ENCODE measurements at regions of chr5 and their contacts with region 1.

Region 1: DNA sequence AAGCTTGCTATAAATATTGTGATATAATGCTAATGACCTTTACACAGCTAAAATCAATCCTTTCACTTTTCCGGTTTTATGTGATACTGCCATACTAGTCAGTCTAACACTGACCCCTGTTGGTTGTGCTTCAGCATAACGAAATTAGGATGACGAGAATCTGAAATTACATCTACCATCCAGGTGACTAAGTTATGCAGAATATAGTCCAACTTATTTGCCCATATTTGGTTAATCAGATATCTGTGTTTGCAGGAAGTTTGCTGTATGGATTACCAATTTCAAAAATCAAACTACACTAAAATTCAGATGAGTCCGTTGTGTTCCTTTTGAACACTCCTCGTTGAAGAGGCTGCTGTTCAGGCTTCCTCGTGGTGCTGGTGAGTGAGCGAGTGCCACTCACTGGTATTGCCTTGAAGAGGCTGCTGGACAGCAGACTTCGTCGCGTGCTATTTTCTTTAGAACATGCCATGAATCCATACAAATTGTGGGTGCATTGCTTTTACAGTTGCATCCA is 32.5 kb downstream of the TENT4A start:
- DNase-seq: peak; percentile 7
- H3K4me3 ChIP-seq: no peak overlapping the region
- H3K27ac ChIP-seq: peak overlapping the region in 1 of 4 donors; percentile 22
- H3K4me1 ChIP-seq: peaks cover 0 to 5% (median 0%) of the 10 kb centered on the region in 4 donors
- H3K27me3 ChIP-seq: no peaks in the 10 kb centered on the region
- CTCF ChIP-seq: peak; percentile 63 to 84 (median 71)
- EP300 ChIP-seq: no peak
- POLR2A ChIP-seq: no peak

Region 2: DNA sequence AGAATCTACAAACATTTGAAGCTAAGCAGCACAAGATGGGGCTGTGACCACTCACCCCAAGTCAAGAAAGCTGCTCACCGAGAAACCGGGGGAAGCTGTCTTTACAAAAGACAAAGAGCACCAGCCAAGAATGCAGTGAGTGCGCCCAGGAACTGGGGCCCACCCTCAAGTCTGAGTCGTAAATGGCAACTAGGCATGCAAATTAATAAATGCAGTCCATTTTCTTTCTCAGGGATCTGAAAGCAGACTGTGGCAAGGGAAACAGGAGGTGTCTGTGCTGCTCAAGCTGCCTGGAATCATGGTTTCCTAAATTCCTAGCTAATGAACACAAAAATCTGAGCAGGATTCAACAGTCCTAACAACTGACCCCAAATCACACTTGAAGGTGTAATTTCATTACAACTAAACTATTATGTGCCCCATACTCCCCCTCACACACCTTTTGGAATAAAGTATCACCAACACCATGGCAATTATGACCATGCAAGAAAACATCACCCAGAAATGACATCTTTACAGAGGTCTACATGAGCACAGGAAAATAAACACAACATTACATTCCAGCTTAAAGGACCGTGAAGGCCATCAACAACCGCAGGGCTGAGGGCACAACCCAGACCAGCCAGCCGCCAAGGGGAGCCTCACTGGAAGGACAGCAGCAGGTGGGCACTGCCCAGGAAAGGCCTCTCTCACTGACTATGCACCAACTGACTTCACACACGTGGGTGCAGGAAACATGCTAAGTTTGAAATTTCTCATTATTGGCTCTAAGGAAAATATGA is 130.5 kb before region 1 on chr5:
- in situ Hi-C with region 1: loop called in 2 of 4 experiments (anchors 10 to 25 kb)
- intact Hi-C with region 1: no loop called
- DNase-seq: no peak
- H3K4me3 ChIP-seq: no peak overlapping the region
- H3K27ac ChIP-seq: no peak overlapping the region
- H3K4me1 ChIP-seq: peaks cover 0 to 3% (median 0%) of the 10 kb centered on the region in 4 donors
- H3K27me3 ChIP-seq: no peaks in the 10 kb centered on the region
- CTCF ChIP-seq: no peak
- EP300 ChIP-seq: no peak
- POLR2A ChIP-seq: no peak

Region 3: DNA sequence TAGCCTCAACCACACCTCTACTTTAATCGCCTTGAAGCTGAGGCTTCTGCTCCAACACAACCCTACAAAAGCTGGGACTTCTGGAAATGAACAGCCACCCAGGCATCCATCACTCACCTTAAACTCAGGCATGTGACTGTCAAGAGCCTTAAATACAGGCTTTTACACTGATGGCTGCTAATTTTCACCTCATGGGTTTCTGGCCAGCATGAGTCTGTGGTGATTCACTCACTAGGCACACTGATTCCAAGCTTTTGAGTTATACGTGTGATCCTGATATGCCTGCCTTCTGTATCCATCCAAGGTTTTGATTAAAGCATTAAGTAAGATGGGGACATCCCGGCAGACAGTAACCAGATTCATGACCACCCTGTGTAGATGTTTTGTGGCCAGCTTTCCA is 121.8 kb before region 1 on chr5:
- in situ Hi-C with region 1: loop called in 3 of 4 experiments (anchors 10 to 25 kb)
- intact Hi-C with region 1: no loop called
- DNase-seq: no peak
- H3K4me3 ChIP-seq: no peak overlapping the region
- H3K27ac ChIP-seq: no peak overlapping the region
- H3K4me1 ChIP-seq: no peaks in the 10 kb centered on the region
- H3K27me3 ChIP-seq: no peaks in the 10 kb centered on the region
- CTCF ChIP-seq: no peak
- EP300 ChIP-seq: no peak
- POLR2A ChIP-seq: no peak

Region 4: GRCh38 chr5:6632917-6633468 is 112.8 kb before region 1 on chr5 and contains the starts of genes NSUN2 and SRD5A1:
- in situ Hi-C with region 1: loop called in 2 of 4 experiments (anchors 10 to 25 kb)
- intact Hi-C with region 1: loop called (anchors 2 kb)
- DNase-seq: peak; percentile 94
- H3K4me3 ChIP-seq: peak within 1 kb of the TSS; percentile 89 to 93 (median 92)
- H3K27ac ChIP-seq: peak within 1 kb of the TSS; percentile 85 to 94 (median 92)
- H3K4me1 ChIP-seq: peaks cover 9 to 27% (median 22%) of the 10 kb centered on the region in 4 donors
- H3K27me3 ChIP-seq: no peaks in the 10 kb centered on the region
- CTCF ChIP-seq: no peak
- EP300 ChIP-seq: no peak
- POLR2A ChIP-seq: peak; percentile 55
- total RNA-seq, gene NSUN2: 29.9 to 77.1 (median 51.7) TPM
- total RNA-seq, gene SRD5A1: 9.0 to 79.8 (median 17.0) TPM